WTC11 (cell line): ENCODE measurements at regions of chr20 and their contacts with region 1.

Region 1: GRCh38 chr20:10696650-10697049 is 22.9 kb upstream of the JAG1 start:
- DNase-seq: peak; percentile 77
- ATAC-seq: peak; percentile 82
- H3K4me3 Mint-ChIP-seq: no peak overlapping the region
- H3K27ac Mint-ChIP-seq: no peak overlapping the region
- H3K4me1 Mint-ChIP-seq: peaks cover 11% of the 10 kb centered on the region
- H3K27me3 Mint-ChIP-seq: peaks cover 4% of the 10 kb centered on the region; the same call in 1 of the 2 replicates
- CTCF ChIP-seq: peak; percentile 85

Region 2: GRCh38 chr20:10611357-10611756 is 85.3 kb before region 1 on chr20:
- CTCF ChIA-PET with region 1: no interaction called
- POLR2A ChIA-PET with region 1: no interaction called
- DNase-seq: peak; percentile 78
- ATAC-seq: peak; percentile 99
- H3K4me3 Mint-ChIP-seq: no peak overlapping the region
- H3K27ac Mint-ChIP-seq: no peak overlapping the region
- H3K4me1 Mint-ChIP-seq: peaks cover 11% of the 10 kb centered on the region
- H3K27me3 Mint-ChIP-seq: no peaks in the 10 kb centered on the region; the same call in 1 of the 2 replicates
- CTCF ChIP-seq: peak; percentile 39

Region 3: DNA sequence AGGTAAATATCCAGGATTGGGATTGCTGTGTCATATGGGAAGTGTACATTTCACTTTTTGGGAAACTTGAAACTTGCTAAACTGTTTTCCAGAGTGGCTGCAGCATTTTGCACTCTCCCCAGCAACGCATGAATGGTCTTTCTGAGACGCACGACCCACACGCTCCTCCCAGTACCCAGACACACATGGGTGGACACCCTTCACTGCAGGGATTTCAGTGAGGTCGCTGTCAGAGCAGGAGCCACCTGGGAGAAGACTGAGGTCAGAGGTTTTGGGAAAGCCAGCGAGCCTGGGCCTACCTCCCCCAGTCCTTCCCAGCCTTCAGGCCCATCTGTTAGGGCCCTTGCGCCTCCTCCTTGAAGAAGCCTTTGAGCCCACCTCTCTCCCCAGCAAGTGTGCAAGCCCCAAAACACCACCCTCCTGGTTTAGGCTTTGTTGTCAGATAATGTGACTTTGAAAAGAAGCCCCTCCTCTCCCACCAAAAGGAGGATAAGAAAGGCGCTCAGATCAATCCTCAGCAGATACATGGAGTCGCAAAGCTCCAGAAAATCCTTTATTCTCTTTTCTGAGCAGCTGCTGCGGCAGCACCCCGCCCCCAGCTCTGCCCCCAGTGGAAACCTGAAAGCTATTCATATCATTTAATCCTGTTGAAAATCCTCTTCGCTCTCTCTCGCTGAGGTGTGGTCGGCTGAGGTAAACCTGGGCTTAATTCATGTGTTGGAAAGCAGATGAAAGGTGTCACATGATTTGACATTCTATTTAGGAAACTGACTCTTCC is 10.1 kb before region 1 on chr20:
- CTCF ChIA-PET with region 1: interaction called, 11 read pairs
- POLR2A ChIA-PET with region 1: no interaction called
- DNase-seq: no peak
- ATAC-seq: peak; percentile 36
- H3K4me3 Mint-ChIP-seq: no peak overlapping the region
- H3K27ac Mint-ChIP-seq: no peak overlapping the region
- H3K4me1 Mint-ChIP-seq: peaks cover 12% of the 10 kb centered on the region
- H3K27me3 Mint-ChIP-seq: no peaks in the 10 kb centered on the region
- CTCF ChIP-seq: no peak